GM12878 (cell line): ENCODE measurements at regions of chr12 and their contacts with region 1.

Region 1: DNA sequence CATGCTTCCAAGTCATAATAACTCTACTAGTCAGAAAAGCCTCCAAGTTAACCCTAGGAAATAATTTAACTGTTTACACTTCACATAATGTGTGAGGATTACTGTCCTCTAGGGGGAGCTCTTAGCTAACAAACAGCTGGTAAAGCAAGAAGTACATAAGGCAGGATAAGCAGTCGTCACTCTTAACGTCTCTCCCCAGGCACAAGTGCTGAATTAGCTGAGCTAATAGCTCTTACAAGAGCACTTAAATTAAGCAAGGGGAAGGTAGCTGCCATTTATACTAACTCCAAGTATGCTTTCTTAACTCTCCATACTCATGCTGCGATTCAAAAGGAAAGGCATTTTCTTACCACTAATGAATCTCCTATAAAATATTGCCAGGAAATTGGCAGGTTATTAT is 79.3 kb upstream of the TSPAN11 start:
- DNase-seq: peak; percentile 28
- ATAC-seq: peak; percentile 53
- H3K4me3 ChIP-seq: no peak overlapping the region
- H3K27ac ChIP-seq: no peak overlapping the region
- H3K4me1 ChIP-seq: peaks cover 3% of the 10 kb centered on the region
- H3K27me3 ChIP-seq: no peaks in the 10 kb centered on the region
- CTCF ChIP-seq: peak; percentile 58 to 72 (median 60); a peak in 5 of 6 replicates
- EP300 ChIP-seq: no peak
- POLR2A ChIP-seq: no peak
- RAD21 ChIP-seq: peak; percentile 91

Region 2: GRCh38 chr12:30862486-30862885 is 15.2 kb after region 1 on chr12:
- CTCF ChIA-PET with region 1: interaction called, 12 read pairs
- POLR2A ChIA-PET with region 1: no interaction called
- RAD21 ChIA-PET with region 1: interaction called, 5 read pairs
- SMC1A ChIA-PET with region 1: interaction called, 6 read pairs
- in situ Hi-C with region 1: no loop called
- intact Hi-C with region 1: no loop called
- DNase-seq: no peak
- ATAC-seq: no peak
- H3K4me3 ChIP-seq: no peak overlapping the region
- H3K27ac ChIP-seq: no peak overlapping the region
- H3K4me1 ChIP-seq: no peaks in the 10 kb centered on the region
- H3K27me3 ChIP-seq: no peaks in the 10 kb centered on the region; a peak in 2 of 4 replicates
- CTCF ChIP-seq: no peak
- EP300 ChIP-seq: no peak
- POLR2A ChIP-seq: no peak
- RAD21 ChIP-seq: no peak

Region 3: GRCh38 chr12:30985814-30986452 is 138.7 kb after region 1 on chr12:
- CTCF ChIA-PET with region 1: interaction called, 125 read pairs
- POLR2A ChIA-PET with region 1: no interaction called
- RAD21 ChIA-PET with region 1: interaction called, 26 read pairs
- SMC1A ChIA-PET with region 1: interaction called, 25 read pairs
- in situ Hi-C with region 1: loop called (anchors 10 kb)
- intact Hi-C with region 1: loop called (anchors 1 kb)
- DNase-seq: no peak
- ATAC-seq: peak; percentile 89
- H3K4me3 ChIP-seq: no peak overlapping the region
- H3K27ac ChIP-seq: no peak overlapping the region
- H3K4me1 ChIP-seq: no peaks in the 10 kb centered on the region
- H3K27me3 ChIP-seq: no peaks in the 10 kb centered on the region
- CTCF ChIP-seq: peak; percentile 72 to 84 (median 81)
- EP300 ChIP-seq: no peak
- POLR2A ChIP-seq: no peak
- RAD21 ChIP-seq: peak; percentile 83

Region 4: GRCh38 chr12:31011746-31012566 is 164.7 kb after region 1 on chr12:
- CTCF ChIA-PET with region 1: interaction called, 31 read pairs
- POLR2A ChIA-PET with region 1: no interaction called
- RAD21 ChIA-PET with region 1: interaction called, 5 read pairs
- SMC1A ChIA-PET with region 1: interaction called, 10 read pairs
- in situ Hi-C with region 1: no loop called
- intact Hi-C with region 1: loop called (anchors 1 kb)
- DNase-seq: no peak
- ATAC-seq: peak; percentile 95
- H3K4me3 ChIP-seq: no peak overlapping the region
- H3K27ac ChIP-seq: no peak overlapping the region
- H3K4me1 ChIP-seq: no peaks in the 10 kb centered on the region
- H3K27me3 ChIP-seq: no peaks in the 10 kb centered on the region
- CTCF ChIP-seq: peak; percentile 26 to 45 (median 39); a peak in 4 of 6 replicates
- EP300 ChIP-seq: no peak
- POLR2A ChIP-seq: no peak
- RAD21 ChIP-seq: peak; percentile 21; the same call in 1 of the 2 replicates

Region 5: DNA sequence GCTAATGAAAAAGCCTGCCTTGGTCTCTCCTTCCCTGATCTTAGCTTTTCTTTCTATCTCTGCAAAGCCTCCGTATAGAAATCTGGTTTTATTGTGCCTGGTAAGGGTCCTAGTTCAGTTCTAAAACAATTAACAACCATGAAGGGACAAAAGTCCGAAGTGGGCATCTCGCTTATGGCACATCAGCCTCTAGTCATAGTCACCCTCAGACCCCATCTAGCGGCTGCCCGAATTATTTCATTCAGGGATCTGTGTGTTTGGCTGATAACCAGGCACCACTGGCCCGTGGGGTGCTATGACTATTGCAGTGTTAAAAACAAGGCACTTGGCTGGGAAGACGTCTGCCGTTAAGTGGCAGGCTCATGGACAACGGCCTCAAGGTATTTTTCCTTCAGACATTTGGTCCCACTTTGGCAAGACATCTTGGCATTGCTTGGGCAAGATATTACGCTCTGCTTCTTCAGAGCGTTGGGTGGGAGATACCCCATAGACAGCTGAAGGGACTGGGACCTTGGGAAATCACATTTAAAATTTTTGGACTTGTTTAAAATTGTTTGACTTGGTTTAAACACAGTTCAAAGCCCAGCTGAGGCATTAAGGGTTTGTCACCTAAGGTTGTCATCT is 391.6 kb after region 1 on chr12:
- CTCF ChIA-PET with region 1: interaction called, 100 read pairs
- POLR2A ChIA-PET with region 1: no interaction called
- RAD21 ChIA-PET with region 1: interaction called, 13 read pairs
- SMC1A ChIA-PET with region 1: interaction called, 20 read pairs
- in situ Hi-C with region 1: loop called (anchors 5 kb)
- intact Hi-C with region 1: loop called (anchors 1 kb)
- DNase-seq: peak; percentile 23
- ATAC-seq: peak; percentile 85
- H3K4me3 ChIP-seq: no peak overlapping the region
- H3K27ac ChIP-seq: no peak overlapping the region
- H3K4me1 ChIP-seq: peaks cover 12% of the 10 kb centered on the region
- H3K27me3 ChIP-seq: no peaks in the 10 kb centered on the region; a peak in 1 of 4 replicates
- CTCF ChIP-seq: peak; percentile 76 to 81 (median 77)
- EP300 ChIP-seq: no peak
- POLR2A ChIP-seq: no peak
- RAD21 ChIP-seq: peak; percentile 82